Left cardiac atrium (tissue), 4 donors: ENCODE measurements at regions of chr1 and their contacts with region 1.

Region 1: DNA sequence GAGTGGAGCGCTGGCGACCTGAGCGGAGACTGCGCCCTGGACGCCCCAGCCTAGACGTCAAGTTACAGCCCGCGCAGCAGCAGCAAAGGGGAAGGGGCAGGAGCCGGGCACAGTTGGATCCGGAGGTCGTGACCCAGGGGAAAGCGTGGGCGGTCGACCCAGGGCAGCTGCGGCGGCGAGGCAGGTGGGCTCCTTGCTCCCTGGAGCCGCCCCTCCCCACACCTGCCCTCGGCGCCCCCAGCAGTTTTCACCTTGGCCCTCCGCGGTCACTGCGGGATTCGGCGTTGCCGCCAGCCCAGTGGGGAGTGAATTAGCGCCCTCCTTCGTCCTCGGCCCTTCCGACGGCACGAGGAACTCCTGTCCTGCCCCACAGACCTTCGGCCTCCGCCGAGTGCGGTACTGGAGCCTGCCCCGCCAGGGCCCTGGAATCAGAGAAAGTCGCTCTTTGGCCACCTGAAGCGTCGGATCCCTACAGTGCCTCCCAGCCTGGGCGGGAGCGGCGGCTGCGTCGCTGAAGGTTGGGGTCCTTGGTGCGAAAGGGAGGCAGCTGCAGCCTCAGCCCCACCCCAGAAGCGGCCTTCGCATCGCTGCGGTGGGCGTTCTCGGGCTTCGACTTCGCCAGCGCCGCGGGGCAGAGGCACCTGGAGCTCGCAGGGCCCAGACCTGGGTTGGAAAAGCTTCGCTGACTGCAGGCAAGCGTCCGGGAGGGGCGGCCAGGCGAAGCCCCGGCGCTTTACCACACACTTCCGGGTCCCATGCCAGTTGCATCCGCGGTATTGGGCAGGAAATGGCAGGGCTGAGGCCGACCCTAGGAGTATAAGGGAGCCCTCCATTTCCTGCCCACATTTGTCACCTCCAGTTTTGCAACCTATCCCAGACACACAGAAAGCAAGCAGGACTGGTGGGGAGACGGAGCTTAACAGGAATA is 4.2 kb downstream of the TFAP2E start:
- DNase-seq: no peak
- ATAC-seq: peak; percentile 76

Region 2: DNA sequence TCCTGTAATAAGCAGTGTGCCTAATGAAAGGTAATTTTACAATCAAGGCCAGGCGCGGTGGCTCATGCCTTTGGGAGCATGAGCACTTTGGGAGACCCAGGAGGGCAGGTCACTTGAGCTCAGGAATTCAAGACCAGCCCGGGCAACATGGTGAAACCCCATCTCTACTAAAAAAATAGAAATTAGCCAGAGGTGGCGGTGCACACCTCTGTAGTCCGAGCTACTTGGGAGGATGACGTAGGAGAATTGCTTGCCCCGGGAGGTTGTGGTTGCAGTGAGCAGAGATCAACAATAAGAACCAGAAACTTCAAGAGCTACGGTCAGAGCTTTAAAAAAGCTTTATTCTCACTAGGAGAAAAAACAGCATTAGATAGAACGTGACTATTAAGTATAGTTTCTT is 419.4 kb before region 1 on chr1:
- intact Hi-C with region 1: no loop called
- DNase-seq: no peak
- ATAC-seq: no peak

Region 3: DNA sequence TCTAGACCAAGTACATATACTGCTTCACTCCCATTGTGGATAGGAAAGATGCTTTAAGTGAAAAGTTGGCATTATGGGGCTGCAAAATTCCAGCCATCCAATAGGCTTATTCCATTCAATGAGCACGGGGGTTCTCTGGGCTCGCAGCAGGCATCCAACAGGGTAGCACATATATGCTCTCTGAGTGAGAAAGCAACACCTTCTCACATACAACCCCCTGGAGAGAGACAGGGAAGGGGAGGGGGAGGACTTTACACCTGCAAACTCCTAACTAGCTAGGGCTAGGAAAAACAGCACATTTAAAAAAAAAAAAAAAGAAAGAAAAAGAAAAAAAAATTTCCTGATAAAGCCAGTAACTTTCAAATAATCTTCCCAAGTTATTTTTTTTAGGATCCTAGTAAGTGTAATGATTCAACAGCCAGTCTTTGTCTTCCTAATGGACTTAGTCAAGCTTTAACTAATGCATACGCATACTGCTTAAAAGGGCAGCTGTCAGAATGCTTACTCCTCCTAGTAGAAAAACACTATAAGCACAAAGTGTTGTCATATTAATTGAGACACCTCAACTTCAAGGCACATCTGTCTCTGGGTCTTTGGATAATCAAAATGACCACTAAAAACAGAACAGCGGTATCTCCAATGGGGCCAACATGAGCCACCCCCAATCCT is 45.3 kb after region 1 on chr1:
- intact Hi-C with region 1: no loop called
- DNase-seq: no peak
- ATAC-seq: no peak

Region 4: GRCh38 chr1:35769759-35770446 is 192.6 kb after region 1 on chr1 and contains the start of gene CLSPN:
- intact Hi-C with region 1: loop called in 1 of 2 experiments (anchors 10 kb)
- DNase-seq: peak; percentile 96
- ATAC-seq: peak; percentile 99 to 100
- total RNA-seq, gene CLSPN: 1.5 to 1.9 TPM